Activated B cell treated with CpG ODN at 0.5 μM for 24 hours (primary cell): ENCODE measurements at regions of chr9 and their contacts with region 1.

Region 1: GRCh38 chr9:20997503-20998076 is 33.9 kb downstream of the HACD4 start:
- DNase-seq: no peak
- ATAC-seq: peak; percentile 31
- H3K4me3 Mint-ChIP-seq: no peak overlapping the region
- H3K27ac Mint-ChIP-seq: no peak overlapping the region
- H3K4me1 Mint-ChIP-seq: peaks cover 32% of the 10 kb centered on the region
- H3K27me3 Mint-ChIP-seq: no peaks in the 10 kb centered on the region
- CTCF ChIP-seq: no peak

Region 2: GRCh38 chr9:21919377-21920362 is 922.1 kb after region 1 on chr9:
- CTCF ChIA-PET with region 1: no interaction called
- POLR2A ChIA-PET with region 1: interaction called, 10 read pairs
- intact Hi-C with region 1: no loop called
- DNase-seq: no peak
- ATAC-seq: peak; percentile 28
- H3K4me3 Mint-ChIP-seq: peak overlapping the region; percentile 0
- H3K27ac Mint-ChIP-seq: no peak overlapping the region
- H3K4me1 Mint-ChIP-seq: peaks cover 15% of the 10 kb centered on the region
- H3K27me3 Mint-ChIP-seq: no peaks in the 10 kb centered on the region
- CTCF ChIP-seq: no peak